ENCODE measurements at regions of chr10 and their contacts with region 1.

Region 1: GRCh38 chr10:3785257-3785850 is 345 bp upstream of the KLF6 start:
- DNase-seq: peak; percentile 100
- CTCF ChIP-seq: no peak

Region 2: GRCh38 chr10:3068201-3068967 is 717.0 kb before region 1 on chr10:
- CTCF ChIA-PET with region 1: no interaction called
- POLR2A ChIA-PET with region 1: no interaction called
- DNase-seq: peak; percentile 70
- CTCF ChIP-seq: no peak

Region 3: GRCh38 chr10:3668276-3668965 is 116.9 kb before region 1 on chr10:
- CTCF ChIA-PET with region 1: no interaction called
- POLR2A ChIA-PET with region 1: no interaction called
- DNase-seq: no peak
- CTCF ChIP-seq: no peak

Region 4: GRCh38 chr10:3757638-3758490 is 27.5 kb before region 1 on chr10:
- CTCF ChIA-PET with region 1: no interaction called
- POLR2A ChIA-PET with region 1: interaction called, 15 read pairs
- DNase-seq: peak; percentile 78
- CTCF ChIP-seq: no peak

Region 5: GRCh38 chr10:3811291-3811870 is 26.0 kb after region 1 on chr10:
- CTCF ChIA-PET with region 1: interaction called, 3 read pairs
- POLR2A ChIA-PET with region 1: interaction called, 26 read pairs
- DNase-seq: peak; percentile 64
- CTCF ChIP-seq: no peak

Region 6: DNA sequence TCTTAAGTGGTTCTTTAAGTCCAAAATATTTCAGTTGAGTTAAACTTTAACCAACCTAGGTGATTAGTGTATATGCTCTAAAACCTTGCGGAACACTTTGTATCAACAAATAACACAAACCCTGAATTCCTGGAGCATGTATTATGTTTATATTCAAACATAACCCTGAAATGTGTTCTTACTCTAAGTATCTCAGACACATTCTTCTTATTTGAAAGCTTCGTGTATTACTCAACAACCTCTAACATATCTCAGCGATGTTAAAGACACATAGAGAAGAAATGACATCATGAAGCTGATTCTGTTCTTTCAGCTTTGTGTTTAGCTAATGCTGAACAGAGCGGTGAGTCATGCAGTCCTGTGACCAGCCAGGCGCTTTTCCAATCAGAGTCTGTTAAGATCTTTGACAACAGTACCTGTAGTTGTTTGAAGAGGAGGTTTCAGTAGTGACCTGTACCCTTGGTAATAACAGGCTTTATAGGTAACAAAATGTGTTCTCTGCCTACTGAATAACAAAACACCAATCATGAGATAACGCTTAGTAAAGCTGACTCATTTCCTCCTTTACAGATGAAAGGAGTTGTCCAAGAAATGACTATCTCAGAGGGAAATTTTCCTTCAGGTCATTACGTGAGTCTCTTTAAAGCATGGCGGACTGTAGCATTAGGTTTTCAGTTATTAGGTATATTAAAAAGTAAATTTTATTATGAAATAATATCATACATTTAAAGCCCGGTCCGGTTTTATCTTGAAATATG is 67.0 kb after region 1 on chr10:
- CTCF ChIA-PET with region 1: no interaction called
- POLR2A ChIA-PET with region 1: interaction called, 45 read pairs
- DNase-seq: peak; percentile 73
- CTCF ChIP-seq: no peak

Region 7: GRCh38 chr10:3873728-3874461 is 88.5 kb after region 1 on chr10:
- CTCF ChIA-PET with region 1: no interaction called
- POLR2A ChIA-PET with region 1: interaction called, 38 read pairs
- DNase-seq: peak; percentile 79
- CTCF ChIP-seq: no peak

Measured in GM10248 (cell line).